CD14-positive monocyte (primary cell): ENCODE measurements at regions of chr3 and their contacts with region 1.

Region 1: GRCh38 chr3:179347345-179348194 is at the start of gene MFN1:
- DNase-seq: peak; percentile 86 to 93 (median 90)
- H3K4me3 ChIP-seq: peak within 1 kb of the TSS; percentile 59 to 95 (median 69)
- H3K4me3 Mint-ChIP-seq: peak within 1 kb of the TSS; percentile 97 to 98
- H3K27ac ChIP-seq: peak within 1 kb of the TSS; percentile 45 to 85
- H3K27ac Mint-ChIP-seq: peak within 1 kb of the TSS; percentile 94 to 99 (median 96)
- H3K4me1 ChIP-seq: peaks cover 15 to 22% of the 10 kb centered on the region in 2 donors
- H3K4me1 Mint-ChIP-seq: peaks cover 11% of the 10 kb centered on the region
- H3K27me3 ChIP-seq: no peaks in the 10 kb centered on the region
- H3K27me3 Mint-ChIP-seq: peaks cover 2 to 4% (median 4%) of the 10 kb centered on the region in 3 donors
- CTCF ChIP-seq: no peak
- polyA plus RNA-seq, gene MFN1: 5.6 to 15.2 (median 12.2) TPM

Region 2: DNA sequence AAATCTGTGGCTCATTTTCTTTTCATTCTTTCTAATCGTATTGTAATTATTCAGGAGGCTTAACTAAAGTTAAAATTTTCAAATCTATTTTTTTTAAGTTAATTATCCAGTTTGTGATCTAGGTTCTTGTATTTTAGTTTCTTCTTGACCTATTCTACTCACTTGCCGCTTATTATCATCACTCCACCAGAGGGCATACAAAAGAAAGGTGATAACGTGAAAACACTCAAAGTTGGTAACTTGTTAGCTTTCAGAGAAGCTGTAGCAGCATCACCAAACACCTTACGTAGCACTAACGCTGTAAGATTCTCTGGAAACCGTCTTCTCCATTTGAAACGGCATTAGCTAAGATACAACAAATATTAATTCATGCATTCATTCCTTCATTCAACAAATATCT is 98.9 kb after region 1 on chr3:
- intact Hi-C with region 1: loop called in 1 of 2 experiments (anchors 10 kb)
- DNase-seq: peak in 2 of 3 donors; percentile 14 to 15
- H3K4me3 ChIP-seq: no peak overlapping the region
- H3K4me3 Mint-ChIP-seq: no peak overlapping the region
- H3K27ac ChIP-seq: no peak overlapping the region
- H3K27ac Mint-ChIP-seq: no peak overlapping the region
- H3K4me1 ChIP-seq: peaks cover 14 to 16% of the 10 kb centered on the region in 2 donors
- H3K4me1 Mint-ChIP-seq: peaks cover 35% of the 10 kb centered on the region
- H3K27me3 ChIP-seq: no peaks in the 10 kb centered on the region
- H3K27me3 Mint-ChIP-seq: no peaks in the 10 kb centered on the region
- CTCF ChIP-seq: peak; percentile 40

Region 3: GRCh38 chr3:179604321-179605078 is 256.9 kb after region 1 on chr3 and contains the starts of genes MRPL47 and NDUFB5:
- intact Hi-C with region 1: loop called (anchors 5 kb)
- DNase-seq: peak; percentile 95 to 98 (median 97)
- H3K4me3 ChIP-seq: peak within 1 kb of the TSS; percentile 79 to 96 (median 96)
- H3K4me3 Mint-ChIP-seq: peak within 1 kb of the TSS; percentile 97 to 100
- H3K27ac ChIP-seq: peak within 1 kb of the TSS; percentile 95 to 99
- H3K27ac Mint-ChIP-seq: peak within 1 kb of the TSS; percentile 99 to 100 (median 99)
- H3K4me1 ChIP-seq: peaks cover 33 to 39% of the 10 kb centered on the region in 2 donors
- H3K4me1 Mint-ChIP-seq: peaks cover 42% of the 10 kb centered on the region
- H3K27me3 ChIP-seq: no peaks in the 10 kb centered on the region
- H3K27me3 Mint-ChIP-seq: peaks cover 0 to 4% (median 0%) of the 10 kb centered on the region in 3 donors
- CTCF ChIP-seq: no peak
- polyA plus RNA-seq, gene MRPL47: 10.3 to 46.4 (median 44.3) TPM
- polyA plus RNA-seq, gene NDUFB5: 30.8 to 144 (median 132) TPM